ENCODE measurements at regions of chr10 and their contacts with region 1.

Region 1: GRCh38 chr10:120689777-120690529 is 161.2 kb upstream of the WDR11 start:
- DNase-seq: no peak
- H3K4me3 ChIP-seq: no peak overlapping the region
- H3K27ac ChIP-seq: no peak overlapping the region
- H3K4me1 ChIP-seq: no peaks in the 10 kb centered on the region
- H3K27me3 ChIP-seq: no peaks in the 10 kb centered on the region
- CTCF ChIP-seq: no peak
- EP300 ChIP-seq: no peak
- POLR2A ChIP-seq: no peak

Region 2: DNA sequence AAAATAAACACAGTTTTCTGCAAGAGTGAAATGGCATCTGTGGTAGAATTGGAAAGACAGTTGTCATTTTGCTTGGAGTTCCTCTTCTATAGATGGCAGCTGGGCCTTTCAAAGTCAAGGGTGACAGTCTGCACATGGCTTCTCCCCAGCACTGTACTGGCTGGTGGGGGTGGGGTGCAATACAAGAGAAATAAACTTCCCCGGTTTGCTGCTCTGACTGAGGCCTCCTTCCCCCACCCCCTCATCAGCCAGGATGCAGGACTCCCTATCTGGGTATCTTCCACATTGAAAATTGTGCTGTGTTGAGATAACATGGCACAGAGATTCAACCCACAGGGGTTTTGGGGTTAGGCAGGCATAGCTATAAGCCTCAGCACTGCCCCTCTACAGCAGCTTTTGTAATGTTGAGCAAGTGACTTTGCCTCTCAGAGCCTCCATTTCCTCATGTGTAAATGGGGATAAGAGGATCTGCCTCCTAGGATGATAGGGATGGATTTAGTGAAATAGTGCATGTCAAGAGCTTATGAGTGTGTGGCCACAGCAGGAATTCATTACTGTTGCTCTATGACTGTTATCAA is 75.4 kb after region 1 on chr10:
- in situ Hi-C with region 1: no loop called
- intact Hi-C with region 1: loop called (anchors 2 kb)
- DNase-seq: no peak
- H3K4me3 ChIP-seq: no peak overlapping the region
- H3K27ac ChIP-seq: no peak overlapping the region
- H3K4me1 ChIP-seq: no peaks in the 10 kb centered on the region
- H3K27me3 ChIP-seq: no peaks in the 10 kb centered on the region
- CTCF ChIP-seq: no peak
- EP300 ChIP-seq: no peak
- POLR2A ChIP-seq: no peak

Measured in transverse colon (tissue), 4 donors.